Gastrocnemius medialis (tissue), 4 donors: ENCODE measurements at regions of chr22 and their contacts with region 1.

Region 1: DNA sequence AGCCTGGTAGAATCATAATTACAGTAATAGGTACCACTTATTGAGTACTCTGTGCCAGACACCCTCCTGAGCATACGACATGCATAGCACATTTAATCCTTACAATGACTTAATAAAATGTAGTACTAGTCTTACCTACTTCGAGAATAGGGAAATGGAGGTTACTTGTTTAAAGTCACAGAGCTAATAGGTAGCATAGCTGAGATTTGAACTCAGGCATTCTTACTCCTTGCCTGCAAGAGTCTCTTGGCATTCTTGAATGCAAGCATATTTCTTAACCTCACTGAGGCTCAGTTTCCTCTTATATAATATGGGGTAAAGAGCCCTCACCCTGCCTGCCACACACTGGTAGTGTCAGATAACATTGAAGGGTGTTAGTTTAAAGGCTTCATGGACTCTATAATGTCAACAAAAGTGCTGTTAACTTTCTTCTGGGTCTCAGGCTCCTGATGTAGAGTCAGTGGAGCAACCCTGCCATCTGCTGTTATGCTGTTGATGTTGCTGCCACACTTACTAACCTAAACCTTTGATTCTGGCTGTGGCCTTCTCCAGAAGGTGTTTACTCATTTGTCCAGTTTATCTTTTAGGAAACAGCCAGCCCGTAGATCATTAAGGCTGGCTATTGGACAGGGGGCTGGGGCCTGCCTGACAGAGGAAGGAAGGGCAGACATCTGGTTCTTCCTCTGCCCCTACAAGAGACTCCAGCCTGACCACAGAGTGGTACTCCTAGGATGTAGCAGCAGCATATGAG is 18.9 kb downstream of the LIMK2 start:
- DNase-seq: peak; percentile 35 to 69
- ATAC-seq: peak; percentile 74 to 79
- H3K4me3 ChIP-seq: no peak overlapping the region
- H3K27ac ChIP-seq: peak overlapping the region; percentile 86 to 88 (median 87)
- H3K4me1 ChIP-seq: peaks cover 28 to 36% of the 10 kb centered on the region in 2 donors
- H3K27me3 ChIP-seq: no peaks in the 10 kb centered on the region
- CTCF ChIP-seq: peak; percentile 70 to 84 (median 82)
- POLR2A ChIP-seq: no peak

Region 2: GRCh38 chr22:30685178-30685577 is 545.9 kb before region 1 on chr22:
- in situ Hi-C with region 1: no loop called
- intact Hi-C with region 1: no loop called
- DNase-seq: no peak
- ATAC-seq: no peak
- H3K4me3 ChIP-seq: no peak overlapping the region
- H3K27ac ChIP-seq: no peak overlapping the region
- H3K4me1 ChIP-seq: no peaks in the 10 kb centered on the region
- H3K27me3 ChIP-seq: no peaks in the 10 kb centered on the region
- CTCF ChIP-seq: no peak
- POLR2A ChIP-seq: no peak

Region 3: GRCh38 chr22:30968924-30969539 is 262.0 kb before region 1 on chr22 and contains the start of gene TUG1:
- in situ Hi-C with region 1: no loop called
- intact Hi-C with region 1: loop called (anchors 2 kb)
- DNase-seq: peak; percentile 99
- ATAC-seq: peak; percentile 91 to 94
- H3K4me3 ChIP-seq: peak within 1 kb of the TSS; percentile 61 to 95 (median 88)
- H3K27ac ChIP-seq: peak within 1 kb of the TSS; percentile 89 to 98 (median 98)
- H3K4me1 ChIP-seq: peaks cover 67 to 69% of the 10 kb centered on the region in 2 donors
- H3K27me3 ChIP-seq: no peaks in the 10 kb centered on the region
- CTCF ChIP-seq: peak in 2 of 5 experiments; percentile 32 to 33
- POLR2A ChIP-seq: peak; percentile 93 to 97
- total RNA-seq, gene TUG1: 14.3 to 23.9 (median 15.8) TPM

Region 4: DNA sequence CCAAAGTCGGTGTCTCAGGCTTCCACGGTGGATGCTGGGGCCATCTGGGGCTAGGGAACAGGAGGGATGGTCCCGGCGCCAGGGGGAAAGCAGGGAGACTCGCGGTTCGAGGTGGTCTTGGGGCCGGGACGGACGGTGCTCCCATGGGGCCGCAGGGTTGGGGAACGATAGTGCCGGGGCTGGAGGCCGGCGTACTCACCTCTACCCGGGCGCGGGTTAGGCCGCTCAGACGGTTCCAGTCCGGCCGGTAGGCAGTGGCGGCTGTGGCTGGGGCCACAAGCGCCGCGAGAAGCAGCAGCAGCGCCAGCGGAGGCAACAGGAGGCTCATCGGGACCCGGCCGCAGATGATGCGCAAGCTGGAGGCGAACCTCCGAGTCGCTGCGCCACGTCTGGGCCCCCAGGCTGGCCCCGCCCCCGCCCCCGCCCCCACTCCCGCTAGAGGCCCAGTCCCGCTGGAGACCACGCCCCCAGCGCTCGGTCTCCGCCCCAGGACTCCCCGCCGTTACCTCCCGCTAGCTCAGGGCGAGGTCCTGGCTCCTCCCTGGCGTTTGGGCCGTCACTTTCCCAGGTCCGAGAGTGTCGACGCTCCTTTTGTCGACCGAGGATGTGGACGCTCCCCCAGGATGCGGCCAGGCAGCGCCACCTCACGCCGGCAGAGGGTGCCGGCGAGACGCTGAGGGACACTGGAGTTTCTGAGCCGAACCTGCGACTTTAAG is 123.7 kb before region 1 on chr22 and contains the start of gene SELENOM:
- in situ Hi-C with region 1: no loop called
- intact Hi-C with region 1: loop called (anchors 1 kb)
- DNase-seq: peak; percentile 96 to 97
- ATAC-seq: peak; percentile 92 to 94
- H3K4me3 ChIP-seq: peak within 1 kb of the TSS; percentile 68 to 81 (median 80)
- H3K27ac ChIP-seq: peak within 1 kb of the TSS; percentile 93 to 98 (median 96)
- H3K4me1 ChIP-seq: peaks cover 22 to 30% of the 10 kb centered on the region in 2 donors
- H3K27me3 ChIP-seq: no peaks in the 10 kb centered on the region
- CTCF ChIP-seq: peak; percentile 89 to 97 (median 94)
- POLR2A ChIP-seq: peak; percentile 85 to 87
- total RNA-seq, gene SELENOM: 144 to 184 (median 157) TPM

Region 5: GRCh38 chr22:31179356-31179755 is 51.7 kb before region 1 on chr22:
- in situ Hi-C with region 1: no loop called
- intact Hi-C with region 1: loop called (anchors 2 kb)
- DNase-seq: peak; percentile 46 to 73
- ATAC-seq: peak; percentile 76 to 84
- H3K4me3 ChIP-seq: no peak overlapping the region
- H3K27ac ChIP-seq: peak overlapping the region; percentile 62 to 79 (median 66)
- H3K4me1 ChIP-seq: peaks cover 32 to 40% of the 10 kb centered on the region in 2 donors
- H3K27me3 ChIP-seq: no peaks in the 10 kb centered on the region
- CTCF ChIP-seq: no peak
- POLR2A ChIP-seq: no peak

Region 6: DNA sequence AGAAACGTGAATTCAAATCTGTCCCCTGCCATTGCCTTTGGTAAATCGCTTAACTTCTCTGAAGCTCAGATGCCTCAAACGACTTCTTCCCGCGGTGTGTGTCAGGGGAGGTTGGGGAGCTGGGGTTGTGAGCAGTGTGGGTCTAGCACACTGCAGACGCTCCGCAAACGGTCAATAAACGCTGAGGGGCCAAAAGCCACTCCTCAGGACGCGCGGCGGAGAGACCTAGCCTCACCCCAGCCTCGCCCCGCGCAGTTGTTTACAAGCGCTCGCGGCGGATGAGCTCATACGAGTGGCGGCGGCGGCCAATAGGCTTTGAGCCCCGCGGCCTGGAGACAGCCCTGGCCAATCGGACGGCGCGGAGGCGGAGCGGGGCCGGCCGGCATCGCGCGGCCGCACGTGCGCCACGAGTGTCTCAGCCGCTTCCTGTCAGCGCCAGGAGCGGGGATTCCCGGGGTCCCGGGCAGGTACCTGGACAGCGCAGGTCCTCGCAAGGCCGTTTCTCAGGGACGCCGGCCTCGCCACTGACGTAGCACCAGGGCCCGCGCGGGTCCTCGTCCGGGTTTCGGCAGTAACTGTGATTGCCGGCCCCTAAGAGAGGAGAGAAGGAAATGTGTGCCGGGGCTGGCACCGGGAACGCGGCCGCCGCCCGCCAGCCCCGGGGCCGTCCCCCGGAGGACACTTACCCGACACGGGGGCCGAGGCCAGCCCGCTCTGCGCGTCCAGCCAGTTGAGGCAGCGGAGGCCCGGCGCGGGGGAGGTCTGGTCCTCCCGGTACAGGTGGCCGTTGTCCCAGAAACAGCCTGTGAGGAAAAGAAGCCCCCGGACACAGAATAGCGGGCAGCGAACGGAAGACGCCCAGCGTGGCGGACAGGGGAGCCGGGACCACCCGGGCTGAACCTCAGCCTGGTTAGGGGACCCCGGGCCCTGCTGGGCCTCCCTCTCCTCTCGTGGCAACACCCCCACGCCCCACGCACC is 59.7 kb after region 1 on chr22:
- in situ Hi-C with region 1: no loop called
- intact Hi-C with region 1: loop called (anchors 2 kb)
- DNase-seq: peak; percentile 95 to 96
- ATAC-seq: peak; percentile 70 to 81
- H3K4me3 ChIP-seq: peak overlapping the region; percentile 56 to 89 (median 72)
- H3K27ac ChIP-seq: peak overlapping the region; percentile 91 to 100 (median 97)
- H3K4me1 ChIP-seq: peaks cover 42 to 48% of the 10 kb centered on the region in 2 donors
- H3K27me3 ChIP-seq: no peaks in the 10 kb centered on the region
- CTCF ChIP-seq: peak in 1 of 5 experiments; percentile 8
- POLR2A ChIP-seq: peak; percentile 98 to 100